Activated CD8-positive, alpha-beta T cell treated with anti-CD3 and anti-CD28 coated beads, Interleukin-2, amount 10 ng/mL, durations not matched to agents 7 days and 5 days (primary cell): ENCODE measurements at regions of chr1 and their contacts with region 1.

Region 1: GRCh38 chr1:150162862-150163706 is 13.4 kb downstream of the PLEKHO1 start:
- DNase-seq: peak; percentile 58
- ATAC-seq: peak; percentile 50
- H3K4me3 Mint-ChIP-seq: peak overlapping the region; percentile 9
- H3K27ac Mint-ChIP-seq: peak overlapping the region; percentile 76
- H3K4me1 Mint-ChIP-seq: peaks cover 78% of the 10 kb centered on the region
- H3K27me3 Mint-ChIP-seq: no peaks in the 10 kb centered on the region

Region 2: GRCh38 chr1:150067184-150068036 is 95.7 kb before region 1 on chr1 and contains the start of gene VPS45:
- CTCF ChIA-PET with region 1: interaction called, 240 read pairs
- POLR2A ChIA-PET with region 1: interaction called, 3 read pairs
- DNase-seq: peak; percentile 90
- ATAC-seq: peak; percentile 91
- H3K4me3 Mint-ChIP-seq: peak within 1 kb of the TSS; percentile 95
- H3K27ac Mint-ChIP-seq: peak within 1 kb of the TSS; percentile 91
- H3K4me1 Mint-ChIP-seq: peaks cover 38% of the 10 kb centered on the region
- H3K27me3 Mint-ChIP-seq: no peaks in the 10 kb centered on the region
- total RNA-seq, gene VPS45: 36.1 to 40.0 TPM

Region 3: DNA sequence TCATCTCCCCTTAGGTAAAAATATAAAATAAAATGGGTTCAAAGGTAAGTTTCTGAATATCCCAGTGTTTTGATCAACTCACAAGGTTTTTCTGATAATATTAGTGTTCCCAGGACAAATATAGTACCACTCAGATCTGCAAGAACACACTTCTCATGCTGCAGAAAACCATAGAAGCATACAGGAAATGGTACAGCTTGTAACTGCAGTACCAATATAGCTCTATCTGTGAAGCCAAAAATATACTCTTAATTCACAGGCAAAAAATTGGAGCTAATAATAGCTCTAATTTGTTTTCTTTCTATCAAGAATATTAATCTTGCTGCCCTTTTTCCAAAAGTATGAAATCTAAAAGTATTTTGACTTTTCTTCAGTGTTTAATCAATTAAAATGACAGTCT is 82.3 kb before region 1 on chr1:
- CTCF ChIA-PET with region 1: interaction called, 240 read pairs
- POLR2A ChIA-PET with region 1: interaction called, 3 read pairs
- DNase-seq: no peak
- ATAC-seq: no peak
- H3K4me3 Mint-ChIP-seq: no peak overlapping the region
- H3K27ac Mint-ChIP-seq: no peak overlapping the region
- H3K4me1 Mint-ChIP-seq: peaks cover 26% of the 10 kb centered on the region
- H3K27me3 Mint-ChIP-seq: no peaks in the 10 kb centered on the region

Region 4: GRCh38 chr1:150149271-150150132 is 13.6 kb before region 1 on chr1 and contains the start of gene PLEKHO1:
- CTCF ChIA-PET with region 1: interaction called, 21 read pairs
- POLR2A ChIA-PET with region 1: interaction called, 39 read pairs
- DNase-seq: peak; percentile 86
- ATAC-seq: peak; percentile 73
- H3K4me3 Mint-ChIP-seq: peak within 1 kb of the TSS; percentile 93
- H3K27ac Mint-ChIP-seq: peak within 1 kb of the TSS; percentile 94
- H3K4me1 Mint-ChIP-seq: peaks cover 70% of the 10 kb centered on the region
- H3K27me3 Mint-ChIP-seq: no peaks in the 10 kb centered on the region
- total RNA-seq, gene PLEKHO1: 138 to 154 TPM

Region 5: GRCh38 chr1:150268705-150269403 is 105.8 kb after region 1 on chr1 and contains the start of gene APH1A:
- CTCF ChIA-PET with region 1: no interaction called
- POLR2A ChIA-PET with region 1: no interaction called
- DNase-seq: peak; percentile 97
- ATAC-seq: peak; percentile 96
- H3K4me3 Mint-ChIP-seq: peak within 1 kb of the TSS; percentile 99
- H3K27ac Mint-ChIP-seq: peak within 1 kb of the TSS; percentile 98
- H3K4me1 Mint-ChIP-seq: peaks cover 40% of the 10 kb centered on the region
- H3K27me3 Mint-ChIP-seq: no peaks in the 10 kb centered on the region
- total RNA-seq, gene APH1A: 128 to 132 TPM